ENCODE measurements at regions of chr6 and their contacts with region 1.

Region 1: DNA sequence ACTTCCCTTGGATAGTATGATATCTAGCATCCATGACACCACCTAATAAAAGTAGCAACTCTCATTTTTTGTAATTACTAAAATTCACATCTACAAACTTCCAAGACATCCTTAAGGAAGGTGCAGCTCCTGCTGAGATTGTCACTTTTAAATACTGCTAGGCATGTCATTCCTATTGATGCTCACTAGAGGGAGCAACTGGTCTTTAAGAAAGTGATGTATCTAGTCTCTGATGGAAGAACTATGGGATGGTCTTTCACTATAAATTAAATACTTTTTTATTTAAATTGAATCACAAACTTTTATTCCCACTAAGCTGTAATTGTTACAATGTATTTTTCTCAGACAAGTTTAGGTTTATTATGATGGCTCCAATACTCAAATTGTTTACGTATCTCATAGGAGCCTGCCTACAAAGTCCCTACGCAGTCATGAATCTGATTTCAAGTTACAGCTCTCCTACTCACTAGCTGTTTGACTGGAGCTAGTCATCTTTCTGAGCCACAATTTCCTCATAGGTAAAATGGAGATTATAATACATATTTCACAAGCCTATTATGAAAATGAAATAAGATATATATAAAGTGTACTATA is 8.1 kb upstream of the TSPYL1 start:
- DNase-seq: no peak
- H3K4me3 Mint-ChIP-seq: no peak overlapping the region
- H3K27ac Mint-ChIP-seq: no peak overlapping the region
- H3K4me1 Mint-ChIP-seq: no peaks in the 10 kb centered on the region
- H3K27me3 Mint-ChIP-seq: no peaks in the 10 kb centered on the region

Region 2: GRCh38 chr6:116561377-116562018 is 273.7 kb after region 1 on chr6:
- CTCF ChIA-PET with region 1: interaction called, 22 read pairs
- POLR2A ChIA-PET with region 1: no interaction called
- DNase-seq: peak; percentile 73
- H3K4me3 Mint-ChIP-seq: no peak overlapping the region
- H3K27ac Mint-ChIP-seq: no peak overlapping the region
- H3K4me1 Mint-ChIP-seq: peaks cover 4% of the 10 kb centered on the region
- H3K27me3 Mint-ChIP-seq: peaks cover 16% of the 10 kb centered on the region